ENCODE measurements at regions of chr9 and their contacts with region 1.

Region 1: DNA sequence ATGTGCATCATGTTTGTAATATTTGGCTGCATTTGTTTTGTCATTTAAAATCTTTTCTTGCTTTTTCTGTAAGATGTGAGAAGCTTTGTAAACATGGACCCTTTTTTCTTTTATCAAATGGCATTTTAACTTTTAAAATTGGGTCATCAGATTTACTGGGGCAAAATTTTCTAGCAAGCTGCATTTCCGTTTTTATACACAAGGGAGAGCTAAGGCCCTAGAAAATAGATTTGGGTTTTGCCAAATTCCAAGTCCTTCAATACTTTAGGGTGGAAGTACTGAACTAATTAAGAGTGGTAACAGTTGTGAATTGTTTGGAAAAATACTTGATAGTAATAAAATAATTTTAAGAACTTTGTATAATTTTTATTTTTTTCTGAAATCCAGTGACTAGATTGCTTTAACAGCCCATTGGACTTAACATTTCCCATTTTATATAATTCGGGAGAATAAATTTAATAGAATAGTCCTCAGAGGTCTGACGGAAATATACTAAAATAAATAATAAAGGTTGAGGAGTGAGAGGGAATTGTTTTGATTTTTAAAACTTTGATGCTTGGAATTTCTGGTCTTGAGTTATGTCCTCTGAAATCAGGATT is 117.4 kb downstream of the SMARCA2 start:
- DNase-seq: no peak
- ATAC-seq: no peak
- H3K4me3 ChIP-seq: no peak overlapping the region
- H3K4me3 Mint-ChIP-seq: no peak overlapping the region
- H3K27ac ChIP-seq: no peak overlapping the region
- H3K27ac Mint-ChIP-seq: no peak overlapping the region
- H3K4me1 ChIP-seq: no peaks in the 10 kb centered on the region
- H3K4me1 Mint-ChIP-seq: peaks cover 4% of the 10 kb centered on the region
- H3K27me3 ChIP-seq: no peaks in the 10 kb centered on the region
- H3K27me3 Mint-ChIP-seq: no peaks in the 10 kb centered on the region
- CTCF ChIP-seq: peak; percentile 74

Region 2: GRCh38 chr9:2181792-2182191 is 49.2 kb after region 1 on chr9:
- CTCF ChIA-PET with region 1: interaction called, 26 read pairs
- POLR2A ChIA-PET with region 1: no interaction called
- intact Hi-C with region 1: loop called (anchors 5 kb)
- DNase-seq: peak; percentile 16
- ATAC-seq: no peak
- H3K4me3 ChIP-seq: no peak overlapping the region
- H3K4me3 Mint-ChIP-seq: no peak overlapping the region
- H3K27ac ChIP-seq: no peak overlapping the region
- H3K27ac Mint-ChIP-seq: no peak overlapping the region
- H3K4me1 ChIP-seq: no peaks in the 10 kb centered on the region
- H3K4me1 Mint-ChIP-seq: no peaks in the 10 kb centered on the region
- H3K27me3 ChIP-seq: no peaks in the 10 kb centered on the region
- H3K27me3 Mint-ChIP-seq: no peaks in the 10 kb centered on the region
- CTCF ChIP-seq: peak; percentile 43

Region 3: DNA sequence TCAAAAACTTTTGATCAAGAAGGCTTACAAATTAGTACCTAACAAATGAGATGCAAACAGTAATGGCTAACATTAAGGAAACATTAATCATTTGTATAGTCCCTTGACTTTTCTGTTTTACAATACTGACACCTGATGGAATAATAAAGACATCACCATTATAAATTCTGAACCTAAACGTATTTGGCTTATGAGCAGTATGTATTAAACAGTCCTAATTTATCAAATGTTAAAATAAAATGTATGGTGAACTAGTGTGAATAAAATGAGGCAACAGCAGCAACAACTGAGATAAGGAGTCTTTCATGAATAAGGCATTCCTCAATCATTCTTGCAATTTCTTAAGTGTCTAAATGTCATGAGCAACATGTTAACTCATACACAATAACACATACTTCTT is 705.3 kb after region 1 on chr9:
- CTCF ChIA-PET with region 1: interaction called, 4 read pairs
- POLR2A ChIA-PET with region 1: no interaction called
- intact Hi-C with region 1: loop called (anchors 10 kb)
- DNase-seq: no peak
- ATAC-seq: no peak
- H3K4me3 ChIP-seq: no peak overlapping the region
- H3K4me3 Mint-ChIP-seq: no peak overlapping the region
- H3K27ac ChIP-seq: no peak overlapping the region
- H3K27ac Mint-ChIP-seq: peak overlapping the region; percentile 42
- H3K4me1 ChIP-seq: peaks cover 9 to 12% of the 10 kb centered on the region in 2 donors
- H3K4me1 Mint-ChIP-seq: peaks cover 22% of the 10 kb centered on the region
- H3K27me3 ChIP-seq: no peaks in the 10 kb centered on the region
- H3K27me3 Mint-ChIP-seq: no peaks in the 10 kb centered on the region
- CTCF ChIP-seq: peak; percentile 17

Measured in B cell (primary cell).